CD4-positive, alpha-beta T cell (primary cell): ENCODE measurements at regions of chr14 and their contacts with region 1.

Region 1: DNA sequence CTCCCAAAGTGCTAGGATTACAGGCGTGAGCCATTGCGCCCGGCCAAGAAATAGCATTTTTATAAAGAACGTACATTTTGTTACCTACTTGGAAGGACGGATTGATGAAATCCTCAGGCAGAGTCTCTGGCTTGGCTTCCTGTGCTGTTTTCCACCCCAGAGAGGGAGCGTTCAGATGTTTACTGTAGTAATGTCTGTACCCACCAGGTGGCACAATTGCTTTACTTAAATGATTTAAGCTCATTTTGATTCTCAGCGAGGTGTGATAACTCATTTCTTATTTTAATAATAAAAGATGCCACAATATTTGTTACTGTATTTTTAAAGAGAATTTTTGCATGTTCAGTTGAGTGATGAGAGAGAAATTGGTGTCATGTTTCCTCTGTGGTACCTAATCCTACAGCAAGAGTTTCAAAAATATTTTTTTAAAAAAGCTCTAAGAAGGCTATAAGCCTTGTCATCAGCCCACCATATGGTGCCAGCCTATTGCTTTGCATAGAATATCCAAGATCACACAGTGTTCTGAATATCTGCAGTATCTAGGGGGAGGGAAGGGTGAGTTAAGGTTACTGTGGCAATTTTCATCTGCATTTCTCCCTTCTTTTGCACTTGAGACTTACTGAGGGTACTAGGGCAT is 82.6 kb upstream of the TRAF3 start:
- DNase-seq: peak; percentile 15 to 81 (median 45)
- ATAC-seq: peak; percentile 89
- H3K4me3 ChIP-seq: no peak overlapping the region
- H3K4me3 Mint-ChIP-seq: no peak overlapping the region
- H3K27ac ChIP-seq: no peak overlapping the region
- H3K27ac Mint-ChIP-seq: no peak overlapping the region
- H3K4me1 ChIP-seq: no peaks in the 10 kb centered on the region
- H3K4me1 Mint-ChIP-seq: peaks cover 37% of the 10 kb centered on the region
- H3K27me3 ChIP-seq: no peaks in the 10 kb centered on the region
- H3K27me3 Mint-ChIP-seq: no peaks in the 10 kb centered on the region
- CTCF ChIP-seq: peak; percentile 83

Region 2: GRCh38 chr14:102917469-102918211 is 223.0 kb after region 1 on chr14:
- CTCF ChIA-PET with region 1: interaction called, 12 read pairs
- POLR2A ChIA-PET with region 1: no interaction called
- intact Hi-C with region 1: loop called (anchors 1 kb)
- DNase-seq: peak; percentile 25 to 70 (median 50)
- ATAC-seq: peak; percentile 57
- H3K4me3 ChIP-seq: no peak overlapping the region
- H3K4me3 Mint-ChIP-seq: no peak overlapping the region
- H3K27ac ChIP-seq: peak overlapping the region in 1 of 2 donors; percentile 7
- H3K27ac Mint-ChIP-seq: no peak overlapping the region
- H3K4me1 ChIP-seq: peaks cover 2% of the 10 kb centered on the region
- H3K4me1 Mint-ChIP-seq: no peaks in the 10 kb centered on the region
- H3K27me3 ChIP-seq: no peaks in the 10 kb centered on the region
- H3K27me3 Mint-ChIP-seq: no peaks in the 10 kb centered on the region
- CTCF ChIP-seq: peak; percentile 44

Region 3: DNA sequence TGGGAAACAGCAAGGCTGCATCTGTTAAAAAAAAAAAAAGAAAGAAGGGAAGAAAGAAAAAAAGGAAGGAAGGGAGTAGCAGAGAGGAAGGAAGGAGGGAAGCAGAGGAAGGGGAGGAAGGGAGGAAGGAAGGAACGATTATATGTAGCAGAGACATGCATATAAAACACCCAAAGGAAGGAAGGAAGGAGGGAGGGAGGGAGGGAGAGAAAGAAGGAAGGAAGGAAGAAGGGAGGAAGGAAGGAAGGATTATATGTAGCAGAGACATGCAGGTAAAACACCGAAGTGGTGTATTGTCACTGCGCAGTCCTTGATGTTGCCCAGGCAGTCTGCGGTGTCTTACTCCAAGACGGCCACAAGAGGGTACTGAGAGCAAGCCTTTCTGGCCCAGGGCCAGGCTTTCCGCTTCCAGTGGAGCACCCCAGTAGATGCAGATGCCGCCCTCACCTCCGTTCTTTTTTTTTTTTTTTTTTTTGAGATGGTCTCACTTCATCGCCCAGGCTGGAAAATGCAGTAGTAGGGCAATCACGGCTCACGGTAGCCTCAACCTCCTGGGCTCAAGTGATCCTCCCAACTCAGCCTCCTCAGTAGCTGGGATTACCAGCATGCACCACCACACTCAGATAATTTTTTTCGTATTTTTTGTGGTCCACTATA is 383.6 kb after region 1 on chr14:
- CTCF ChIA-PET with region 1: no interaction called
- POLR2A ChIA-PET with region 1: no interaction called
- intact Hi-C with region 1: loop called in 1 of 2 experiments (anchors 5 kb)
- DNase-seq: peak; percentile 64 to 91 (median 74)
- ATAC-seq: peak; percentile 88
- H3K4me3 ChIP-seq: no peak overlapping the region
- H3K4me3 Mint-ChIP-seq: peak overlapping the region; percentile 27
- H3K27ac ChIP-seq: no peak overlapping the region
- H3K27ac Mint-ChIP-seq: no peak overlapping the region
- H3K4me1 ChIP-seq: peaks cover 23% of the 10 kb centered on the region
- H3K4me1 Mint-ChIP-seq: no peaks in the 10 kb centered on the region
- H3K27me3 ChIP-seq: no peaks in the 10 kb centered on the region
- H3K27me3 Mint-ChIP-seq: peaks cover 6% of the 10 kb centered on the region
- CTCF ChIP-seq: peak; percentile 71

Region 4: GRCh38 chr14:103091041-103091882 is 396.6 kb after region 1 on chr14:
- CTCF ChIA-PET with region 1: interaction called, 3 read pairs
- POLR2A ChIA-PET with region 1: no interaction called
- intact Hi-C with region 1: loop called (anchors 1 to 2 kb)
- DNase-seq: peak; percentile 57 to 89 (median 72)
- ATAC-seq: peak; percentile 95
- H3K4me3 ChIP-seq: peak overlapping the region; percentile 46
- H3K4me3 Mint-ChIP-seq: peak overlapping the region; percentile 11
- H3K27ac ChIP-seq: no peak overlapping the region
- H3K27ac Mint-ChIP-seq: no peak overlapping the region
- H3K4me1 ChIP-seq: peaks cover 17% of the 10 kb centered on the region
- H3K4me1 Mint-ChIP-seq: no peaks in the 10 kb centered on the region
- H3K27me3 ChIP-seq: peaks cover 0 to 9% of the 10 kb centered on the region in 2 experiments
- H3K27me3 Mint-ChIP-seq: peaks cover 15% of the 10 kb centered on the region
- CTCF ChIP-seq: peak; percentile 71

Region 5: GRCh38 chr14:103185051-103185992 is 490.7 kb after region 1 on chr14:
- CTCF ChIA-PET with region 1: no interaction called
- POLR2A ChIA-PET with region 1: no interaction called
- intact Hi-C with region 1: loop called in 1 of 2 experiments (anchors 1 kb)
- DNase-seq: peak in 3 of 14 experiments; percentile 5 to 40 (median 37)
- ATAC-seq: no peak
- H3K4me3 ChIP-seq: no peak overlapping the region
- H3K4me3 Mint-ChIP-seq: no peak overlapping the region
- H3K27ac ChIP-seq: no peak overlapping the region
- H3K27ac Mint-ChIP-seq: no peak overlapping the region
- H3K4me1 ChIP-seq: peaks cover 7% of the 10 kb centered on the region
- H3K4me1 Mint-ChIP-seq: peaks cover 12% of the 10 kb centered on the region
- H3K27me3 ChIP-seq: peaks cover 21 to 26% of the 10 kb centered on the region in 2 experiments
- H3K27me3 Mint-ChIP-seq: peaks cover 58% of the 10 kb centered on the region
- CTCF ChIP-seq: peak; percentile 75

Region 6: DNA sequence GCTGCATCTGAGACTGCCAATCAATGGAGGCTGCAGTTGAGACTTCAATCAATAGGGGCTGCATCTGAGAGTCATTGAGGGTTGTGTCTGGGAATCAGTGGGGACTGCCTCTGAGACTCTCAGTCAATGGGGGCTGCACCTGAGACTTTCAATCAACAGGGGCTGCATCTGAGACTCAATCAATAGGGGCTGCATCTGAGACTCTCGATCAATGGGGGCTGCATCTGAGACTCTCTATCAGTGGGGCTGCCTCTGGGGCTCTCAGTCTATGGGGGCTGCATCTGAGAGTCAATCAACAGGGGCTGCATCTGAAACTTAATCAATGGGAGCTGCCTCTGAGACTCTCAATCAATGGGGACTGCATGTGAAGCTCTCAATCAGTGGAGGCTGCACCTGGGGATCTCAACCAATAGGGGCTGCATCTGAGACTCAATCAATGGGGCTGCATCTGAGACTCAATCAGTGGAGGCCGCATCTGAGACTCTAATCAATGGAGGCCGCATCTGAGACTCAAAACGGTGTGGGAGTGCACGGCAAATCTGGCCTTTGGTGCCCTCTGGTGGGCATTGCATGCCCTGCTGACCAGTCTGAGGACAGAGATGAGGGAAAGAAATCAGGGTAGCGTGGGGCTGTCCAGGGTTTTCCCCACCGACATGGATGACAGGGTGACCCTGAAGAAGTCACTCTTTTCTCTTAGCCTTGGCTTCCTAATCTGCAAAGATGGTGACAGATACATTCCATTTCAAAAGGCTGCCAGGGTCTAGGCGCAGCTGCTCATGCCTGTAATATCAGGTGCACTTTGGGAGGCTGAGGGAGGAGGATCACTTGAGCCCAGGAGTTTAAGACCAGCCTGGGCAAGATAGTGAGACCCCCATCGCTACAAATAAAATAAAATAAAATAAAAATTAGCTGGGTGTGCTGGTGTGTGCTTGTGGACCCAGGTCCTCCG is 598.1 kb after region 1 on chr14:
- CTCF ChIA-PET with region 1: interaction called, 4 read pairs
- POLR2A ChIA-PET with region 1: no interaction called
- intact Hi-C with region 1: loop called (anchors 1 to 2 kb)
- DNase-seq: peak; percentile 46 to 82 (median 65)
- ATAC-seq: peak; percentile 85
- H3K4me3 ChIP-seq: no peak overlapping the region
- H3K4me3 Mint-ChIP-seq: no peak overlapping the region
- H3K27ac ChIP-seq: no peak overlapping the region
- H3K27ac Mint-ChIP-seq: no peak overlapping the region
- H3K4me1 ChIP-seq: no peaks in the 10 kb centered on the region
- H3K4me1 Mint-ChIP-seq: no peaks in the 10 kb centered on the region
- H3K27me3 ChIP-seq: peaks cover 0 to 2% of the 10 kb centered on the region in 2 experiments
- H3K27me3 Mint-ChIP-seq: peaks cover 18% of the 10 kb centered on the region
- CTCF ChIP-seq: peak; percentile 84